HepG2 (cell line): ENCODE measurements at regions of chr2 and their contacts with region 1.

Region 1: DNA sequence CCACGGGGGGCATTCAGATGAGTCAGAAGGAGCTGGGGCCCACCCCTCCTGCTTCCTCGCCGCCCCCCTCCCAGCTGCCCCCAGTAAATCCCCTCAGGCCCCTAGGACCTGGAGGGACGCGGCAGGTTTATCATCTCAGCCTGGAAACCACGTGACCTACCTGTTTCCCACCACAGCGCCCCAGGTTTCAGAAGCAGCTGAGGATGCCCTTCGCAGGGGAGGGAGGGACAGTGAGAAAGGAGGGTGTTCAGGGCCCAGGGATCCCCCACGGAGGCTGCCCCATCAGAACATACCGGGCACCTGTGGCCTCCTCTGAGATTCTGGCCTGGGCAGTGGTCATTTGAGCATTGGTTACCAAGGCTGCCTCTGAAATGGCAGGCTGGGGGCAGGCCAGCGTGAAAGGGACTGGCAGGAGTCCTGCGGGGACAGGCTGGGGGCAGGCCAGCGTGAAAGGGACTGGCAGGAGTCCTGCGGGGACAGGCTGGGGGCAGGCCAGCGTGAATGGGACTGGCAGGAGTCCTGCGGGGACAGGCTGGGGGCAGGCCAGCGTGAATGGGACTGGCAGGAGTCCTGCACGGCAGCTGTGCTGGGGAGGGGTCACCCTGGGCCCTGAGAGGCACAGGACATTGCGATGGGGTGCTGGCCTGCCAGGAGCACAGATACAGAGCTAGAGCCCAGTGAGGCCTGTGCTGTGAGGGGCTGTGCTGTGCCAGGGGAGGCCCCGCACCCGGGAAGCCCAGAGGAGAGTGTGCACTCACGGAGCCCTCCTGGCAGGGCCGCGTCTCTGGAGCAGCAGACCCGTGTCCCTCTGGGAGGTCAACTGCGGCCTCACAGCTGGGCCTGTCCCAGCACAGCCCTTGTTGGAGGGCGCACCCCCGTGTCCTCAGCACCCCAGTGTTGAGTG is 1.6 kb downstream of the NEU4 start:
- DNase-seq: no peak
- ATAC-seq: no peak
- H3K4me3 ChIP-seq: peak overlapping the region; percentile 73 to 85 (median 81)
- H3K27ac ChIP-seq: peak overlapping the region; percentile 84
- H3K4me1 ChIP-seq: peaks cover 36% of the 10 kb centered on the region
- H3K27me3 ChIP-seq: no peaks in the 10 kb centered on the region; a peak in 1 of 5 replicates
- CTCF ChIP-seq: no peak
- EP300 ChIP-seq: no peak
- POLR2A ChIP-seq: no peak
- RAD21 ChIP-seq: no peak

Region 2: DNA sequence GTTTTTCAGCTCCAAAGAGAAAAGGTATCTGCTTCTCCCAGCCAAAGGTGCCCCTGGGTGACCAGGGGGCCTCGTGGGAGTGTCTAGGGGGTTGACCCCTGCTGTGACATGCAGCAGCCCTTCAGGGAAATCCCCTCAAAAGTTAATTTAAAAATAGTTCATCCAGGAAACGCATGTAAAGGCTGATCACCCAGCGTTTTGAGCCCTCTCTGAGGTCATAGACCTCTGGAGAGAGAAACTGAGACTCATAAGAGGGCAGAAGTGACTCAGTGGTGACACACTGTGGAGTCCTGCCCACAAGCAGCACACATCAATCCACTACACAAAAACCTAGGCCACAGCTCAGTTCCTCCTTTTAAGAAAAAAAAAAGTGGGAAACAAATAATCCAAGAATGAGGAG is 22.0 kb before region 1 on chr2:
- CTCF ChIA-PET with region 1: no interaction called
- POLR2A ChIA-PET with region 1: interaction called, 12 read pairs
- in situ Hi-C with region 1: no loop called
- intact Hi-C with region 1: no loop called
- DNase-seq: no peak
- ATAC-seq: no peak
- H3K4me3 ChIP-seq: no peak overlapping the region
- H3K27ac ChIP-seq: no peak overlapping the region
- H3K4me1 ChIP-seq: peaks cover 25% of the 10 kb centered on the region
- H3K27me3 ChIP-seq: no peaks in the 10 kb centered on the region
- CTCF ChIP-seq: peak; percentile 33
- EP300 ChIP-seq: no peak
- POLR2A ChIP-seq: no peak
- RAD21 ChIP-seq: no peak